Activated naive CD4-positive, alpha-beta T cell treated with anti-CD3 and anti-CD28 coated beads for 36 hours (primary cell): ENCODE measurements at regions of chrX and their contacts with region 1.

Region 1: GRCh38 chrX:106999002-106999975 is 723 bp downstream of the MORC4 start:
- DNase-seq: peak; percentile 63
- H3K4me3 Mint-ChIP-seq: peak overlapping the region; percentile 72
- H3K27ac Mint-ChIP-seq: no peak overlapping the region
- H3K4me1 Mint-ChIP-seq: peaks cover 8% of the 10 kb centered on the region
- H3K27me3 Mint-ChIP-seq: no peaks in the 10 kb centered on the region

Region 2: GRCh38 chrX:106894392-106894909 is 104.8 kb before region 1 on chrX:
- CTCF ChIA-PET with region 1: interaction called, 3 read pairs
- intact Hi-C with region 1: loop called (anchors 2 kb)
- DNase-seq: peak; percentile 64
- H3K4me3 Mint-ChIP-seq: no peak overlapping the region
- H3K27ac Mint-ChIP-seq: no peak overlapping the region
- H3K4me1 Mint-ChIP-seq: peaks cover 5% of the 10 kb centered on the region
- H3K27me3 Mint-ChIP-seq: no peaks in the 10 kb centered on the region

Region 3: DNA sequence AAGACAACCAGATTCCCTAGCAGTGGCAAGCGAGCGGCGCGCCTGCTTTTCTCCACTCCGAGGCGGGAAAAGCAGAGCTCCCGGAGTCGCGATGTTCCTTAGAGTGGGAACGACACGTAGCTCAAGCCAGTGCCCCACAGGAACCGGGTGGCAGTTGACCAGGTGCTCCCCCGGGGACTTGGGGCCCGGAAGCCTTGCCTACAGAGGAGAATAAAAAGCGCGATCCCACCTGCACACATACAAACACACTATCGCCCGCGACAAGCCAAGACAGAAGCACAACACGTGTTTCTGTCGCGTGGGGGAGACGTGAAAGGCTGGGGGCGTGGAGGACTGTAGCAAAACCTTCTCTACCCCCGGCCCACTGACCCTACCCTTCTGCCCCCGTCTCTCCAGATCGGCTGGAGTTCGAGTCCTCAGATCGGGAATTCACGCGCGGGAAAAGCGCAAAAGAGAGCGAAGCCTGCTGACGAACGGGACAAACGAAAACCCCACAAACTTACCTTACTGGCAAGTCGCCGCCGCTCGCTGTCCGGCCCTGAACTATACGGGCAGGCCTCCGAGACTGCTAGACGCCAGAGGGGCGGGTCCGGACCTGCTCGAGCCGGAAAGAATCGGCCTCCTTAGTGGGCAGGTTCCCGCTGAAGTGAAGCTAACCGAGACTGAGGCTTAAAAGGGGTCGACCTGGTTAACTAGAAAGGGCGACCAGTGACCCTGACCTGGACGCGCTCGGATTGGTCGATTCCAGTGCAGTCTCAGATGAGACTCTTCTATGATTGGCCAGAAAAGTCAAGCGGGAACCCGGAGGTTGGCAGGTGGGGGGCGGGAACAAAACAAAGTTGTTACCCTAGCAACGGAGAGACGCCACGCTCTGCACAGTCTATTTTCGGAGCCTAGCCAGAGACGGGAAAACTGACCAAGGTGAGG is 206.7 kb after region 1 on chrX and contains the starts of genes DNAAF6 and NUP62CL:
- CTCF ChIA-PET with region 1: no interaction called
- intact Hi-C with region 1: loop called (anchors 2 kb)
- DNase-seq: peak; percentile 77
- H3K4me3 Mint-ChIP-seq: peak within 1 kb of the TSS; percentile 85
- H3K27ac Mint-ChIP-seq: no peak within 1 kb of the TSS
- H3K4me1 Mint-ChIP-seq: peaks cover 2% of the 10 kb centered on the region
- H3K27me3 Mint-ChIP-seq: peaks cover 2% of the 10 kb centered on the region
- total RNA-seq, gene DNAAF6: not detected
- total RNA-seq, gene NUP62CL: 3.6 TPM

Region 4: DNA sequence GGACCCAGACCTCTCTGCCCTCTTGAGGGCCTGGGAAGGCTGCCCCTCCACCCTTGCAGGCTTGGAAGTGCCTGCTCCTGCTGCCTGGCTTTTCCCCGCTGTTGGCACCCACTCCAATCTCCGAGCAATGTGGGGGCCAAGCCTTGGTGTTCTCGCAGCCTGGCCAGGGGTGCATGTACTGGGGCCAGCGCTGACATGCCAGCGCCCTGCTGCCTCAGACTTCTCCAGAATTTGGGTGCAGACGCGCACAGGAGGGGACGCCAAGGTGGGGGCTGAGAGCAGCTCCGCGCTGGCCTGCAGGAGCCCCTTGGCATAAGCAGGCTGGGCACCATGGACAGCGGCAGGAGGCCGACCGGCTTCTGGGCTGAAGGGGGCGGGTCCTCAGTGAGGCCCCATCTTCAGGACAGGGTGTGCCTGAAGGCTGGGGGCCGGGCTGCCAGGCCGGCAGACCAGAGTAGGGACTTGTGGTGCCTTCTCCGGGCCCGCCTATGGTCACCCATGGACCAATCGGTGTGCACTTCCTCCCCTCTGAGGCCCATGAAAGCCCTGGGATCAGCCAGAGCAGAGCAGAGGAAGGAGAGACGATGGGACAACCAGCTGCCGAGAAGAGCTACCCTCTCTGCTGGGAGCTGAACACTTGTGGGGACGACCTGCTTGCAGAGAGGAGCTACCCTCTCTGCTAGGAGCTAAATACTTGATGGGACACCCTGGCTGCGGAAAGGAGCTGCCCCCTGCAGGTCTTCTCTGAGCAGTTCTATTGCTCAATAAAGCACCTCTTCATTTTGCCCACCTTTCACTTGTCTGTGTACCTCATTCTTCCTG is 325.4 kb after region 1 on chrX:
- CTCF ChIA-PET with region 1: interaction called, 7 read pairs
- intact Hi-C with region 1: loop called (anchors 1 kb)
- DNase-seq: peak; percentile 34
- H3K4me3 Mint-ChIP-seq: no peak overlapping the region
- H3K27ac Mint-ChIP-seq: no peak overlapping the region
- H3K4me1 Mint-ChIP-seq: no peaks in the 10 kb centered on the region
- H3K27me3 Mint-ChIP-seq: no peaks in the 10 kb centered on the region

Region 5: GRCh38 chrX:107454302-107454701 is 455.0 kb after region 1 on chrX:
- CTCF ChIA-PET with region 1: no interaction called
- intact Hi-C with region 1: loop called (anchors 5 kb)
- DNase-seq: peak; percentile 59
- H3K4me3 Mint-ChIP-seq: no peak overlapping the region
- H3K27ac Mint-ChIP-seq: no peak overlapping the region
- H3K4me1 Mint-ChIP-seq: peaks cover 14% of the 10 kb centered on the region
- H3K27me3 Mint-ChIP-seq: peaks cover 32% of the 10 kb centered on the region